Ovary (tissue), 10 donors: ENCODE measurements at regions of chr7 and their contacts with region 1.

Region 1: GRCh38 chr7:76411626-76412025 is 2.1 kb upstream of the SSC4D start:
- DNase-seq: no peak
- H3K4me3 ChIP-seq: no peak overlapping the region
- H3K27ac ChIP-seq: no peak overlapping the region
- H3K4me1 ChIP-seq: no peaks in the 10 kb centered on the region
- H3K27me3 ChIP-seq: no peaks in the 10 kb centered on the region
- CTCF ChIP-seq: no peak
- EP300 ChIP-seq: no peak
- POLR2A ChIP-seq: no peak

Region 2: GRCh38 chr7:76244781-76245391 is 166.7 kb before region 1 on chr7:
- intact Hi-C with region 1: no loop called
- DNase-seq: no peak
- H3K4me3 ChIP-seq: no peak overlapping the region
- H3K27ac ChIP-seq: no peak overlapping the region
- H3K4me1 ChIP-seq: no peaks in the 10 kb centered on the region
- H3K27me3 ChIP-seq: no peaks in the 10 kb centered on the region
- CTCF ChIP-seq: no peak
- EP300 ChIP-seq: no peak
- POLR2A ChIP-seq: no peak

Region 3: DNA sequence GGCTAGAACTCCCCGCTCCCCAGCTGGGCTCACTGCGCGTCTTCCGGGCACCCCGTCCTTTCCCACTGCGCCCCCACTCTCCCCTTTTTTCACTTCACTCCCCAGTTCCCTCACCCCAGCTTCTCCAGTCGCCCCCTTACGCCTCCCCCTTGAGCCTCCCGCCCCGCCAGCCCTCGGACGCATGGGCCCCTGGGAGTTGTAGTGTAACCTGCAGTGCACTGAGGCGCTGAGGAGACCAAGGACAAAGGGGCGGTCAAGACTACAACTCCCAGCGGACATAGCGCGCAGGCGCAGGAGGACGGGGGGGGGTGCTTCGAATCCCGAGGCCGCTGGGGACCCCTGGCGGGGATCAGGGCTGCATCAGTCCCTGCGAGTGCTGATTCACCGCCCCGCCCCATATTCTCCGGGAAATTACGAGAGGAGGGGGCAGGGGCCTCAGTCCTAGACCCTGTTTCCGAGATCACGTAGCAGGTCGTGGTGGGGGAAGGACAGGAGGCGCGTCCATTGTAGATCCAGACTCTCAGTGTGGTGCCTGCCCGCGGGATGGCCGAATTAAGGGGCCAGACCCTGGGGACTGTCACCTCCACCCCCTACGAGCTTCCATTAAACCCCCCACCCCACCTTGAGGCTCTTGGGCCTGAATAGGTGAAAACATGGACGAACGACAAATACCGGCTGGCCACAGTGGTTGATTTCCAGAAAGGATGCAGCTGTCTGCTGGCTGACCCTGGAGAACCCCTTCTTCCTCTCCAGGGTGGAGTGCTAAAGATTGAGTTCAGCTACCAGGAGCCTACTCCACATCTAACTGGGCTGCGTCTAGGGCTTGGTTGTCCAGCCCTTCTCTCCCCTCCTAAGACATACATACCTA is 52.3 kb before region 1 on chr7:
- intact Hi-C with region 1: loop called in 1 of 4 experiments (anchors 10 kb)
- DNase-seq: peak; percentile 94 to 99 (median 97)
- H3K4me3 ChIP-seq: peak overlapping the region; percentile 99
- H3K27ac ChIP-seq: peak overlapping the region; percentile 95 to 97
- H3K4me1 ChIP-seq: peaks cover 6% of the 10 kb centered on the region
- H3K27me3 ChIP-seq: no peaks in the 10 kb centered on the region
- CTCF ChIP-seq: peak; percentile 69 to 96 (median 94)
- EP300 ChIP-seq: peak; percentile 90
- POLR2A ChIP-seq: peak; percentile 36